Activated CD4-positive, alpha-beta T cell treated with anti-CD3 and anti-CD28 coated beads for 36 hours (primary cell): ENCODE measurements at regions of chr19 and their contacts with region 1.

Region 1: GRCh38 chr19:4164262-4164661 is 10.8 kb downstream of the CREB3L3 start:
- DNase-seq: no peak
- ATAC-seq: no peak
- H3K4me3 Mint-ChIP-seq: no peak overlapping the region
- H3K27ac Mint-ChIP-seq: no peak overlapping the region
- H3K4me1 Mint-ChIP-seq: no peaks in the 10 kb centered on the region
- H3K27me3 Mint-ChIP-seq: peaks cover 9% of the 10 kb centered on the region

Region 2: DNA sequence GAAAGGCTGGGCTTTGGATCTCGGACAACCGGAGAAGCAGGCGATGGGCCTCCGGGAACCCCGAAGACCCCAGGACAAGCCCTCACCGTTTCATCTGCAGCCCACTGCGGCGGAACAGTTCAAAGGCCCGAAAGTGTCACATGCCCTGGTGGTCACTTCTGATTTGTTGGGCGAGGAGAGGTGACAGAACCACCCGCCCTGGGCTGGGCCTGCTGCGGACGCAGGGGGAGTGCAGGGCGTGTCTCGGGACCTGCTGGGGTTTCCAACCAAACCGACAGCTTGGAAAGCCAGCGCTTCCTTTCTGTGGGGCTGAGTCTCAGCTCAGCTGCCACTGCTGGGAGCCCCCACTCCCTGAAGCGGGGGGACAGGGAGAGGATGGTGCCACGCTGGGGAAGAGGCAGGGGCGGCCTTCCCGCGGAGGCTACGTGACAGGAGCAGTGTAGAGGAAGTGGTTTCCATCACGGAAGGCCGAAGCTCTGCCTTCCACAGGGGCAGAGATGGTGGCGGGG is 74.8 kb before region 1 on chr19:
- CTCF ChIA-PET with region 1: no interaction called
- POLR2A ChIA-PET with region 1: no interaction called
- intact Hi-C with region 1: no loop called
- DNase-seq: peak; percentile 78
- ATAC-seq: peak; percentile 80
- H3K4me3 Mint-ChIP-seq: peak overlapping the region; percentile 76
- H3K27ac Mint-ChIP-seq: peak overlapping the region; percentile 93
- H3K4me1 Mint-ChIP-seq: peaks cover 43% of the 10 kb centered on the region
- H3K27me3 Mint-ChIP-seq: no peaks in the 10 kb centered on the region

Region 3: DNA sequence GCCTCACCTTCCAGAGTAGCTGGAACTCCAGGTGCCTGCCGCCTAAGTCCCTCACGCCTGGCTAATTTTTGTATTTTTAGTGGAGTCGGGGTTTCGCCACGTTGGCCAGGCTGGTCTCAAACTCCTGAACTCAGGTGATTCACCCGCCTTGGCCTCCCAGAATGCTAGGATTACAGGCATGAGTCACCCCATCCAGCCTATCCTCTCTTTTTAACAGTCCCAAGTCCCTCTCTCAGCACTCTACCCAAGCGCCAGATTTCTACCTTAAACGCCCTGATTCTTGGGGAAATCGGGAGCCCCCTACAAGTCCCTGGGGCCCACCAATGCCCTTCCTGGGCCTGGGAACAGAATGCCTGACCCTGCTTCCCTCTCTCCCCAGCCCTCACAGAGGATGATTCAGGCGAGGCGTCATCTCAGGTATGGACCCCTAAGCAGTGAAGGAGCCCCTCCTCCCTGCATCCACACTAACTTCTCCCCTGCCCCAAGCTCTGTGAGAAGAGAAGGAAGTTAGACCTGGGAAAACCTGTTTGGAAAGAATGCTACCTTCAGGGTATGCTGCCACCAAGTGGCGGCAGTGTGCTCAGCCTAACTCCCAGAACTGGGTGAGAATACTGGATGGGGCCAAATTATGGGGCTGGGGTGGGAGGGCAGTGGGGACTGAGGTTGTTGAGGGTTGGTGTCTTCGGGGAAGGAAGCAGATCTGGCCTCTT is 44.3 kb after region 1 on chr19:
- CTCF ChIA-PET with region 1: interaction called, 3 read pairs
- POLR2A ChIA-PET with region 1: no interaction called
- intact Hi-C with region 1: loop called (anchors 1 to 5 kb)
- DNase-seq: no peak
- ATAC-seq: no peak
- H3K4me3 Mint-ChIP-seq: no peak overlapping the region
- H3K27ac Mint-ChIP-seq: no peak overlapping the region
- H3K4me1 Mint-ChIP-seq: no peaks in the 10 kb centered on the region
- H3K27me3 Mint-ChIP-seq: peaks cover 5% of the 10 kb centered on the region

Region 4: DNA sequence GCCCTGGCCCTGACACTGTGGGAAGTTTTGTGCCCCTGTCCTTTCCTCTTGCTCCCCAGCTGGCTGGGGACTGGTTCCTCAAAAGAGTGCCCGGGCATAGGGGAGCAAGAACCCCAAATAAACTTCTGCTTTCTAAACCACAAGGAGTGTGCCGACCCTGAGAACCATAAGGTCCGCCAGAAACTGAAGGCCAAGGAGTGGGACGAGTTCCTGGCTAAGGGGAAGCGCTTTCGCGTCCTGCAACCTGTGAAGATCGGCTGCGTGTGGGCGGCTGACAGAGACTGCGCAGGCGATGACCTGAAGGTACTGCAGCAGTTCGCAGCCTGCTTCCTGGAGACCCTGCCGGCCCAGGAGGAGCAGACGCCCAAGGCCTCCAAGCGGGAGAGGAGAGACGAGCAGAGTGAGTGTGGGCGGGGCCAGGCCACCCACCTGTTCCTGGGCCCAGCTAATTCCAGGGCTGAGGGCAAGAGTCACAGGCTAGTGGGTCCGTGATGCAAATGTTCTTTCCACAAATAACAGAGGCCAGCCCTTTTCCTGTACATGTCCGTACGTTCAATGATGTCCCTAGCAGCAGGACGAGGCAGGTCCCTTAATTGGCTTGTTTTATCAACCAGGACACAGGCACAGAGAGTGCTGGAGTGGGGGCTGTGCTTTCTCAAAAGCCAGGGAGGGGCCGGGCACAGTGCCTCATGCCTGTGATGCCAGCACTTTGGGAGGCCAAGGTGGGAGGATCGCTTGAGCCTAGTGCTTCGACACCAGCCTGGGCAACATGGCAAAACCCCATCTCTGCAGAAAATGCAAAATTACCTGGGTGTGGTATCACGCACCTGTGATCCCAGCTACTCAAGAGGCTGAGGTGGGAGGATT is 267.8 kb after region 1 on chr19:
- CTCF ChIA-PET with region 1: no interaction called
- POLR2A ChIA-PET with region 1: no interaction called
- intact Hi-C with region 1: no loop called
- DNase-seq: no peak
- ATAC-seq: no peak
- H3K4me3 Mint-ChIP-seq: no peak overlapping the region
- H3K27ac Mint-ChIP-seq: no peak overlapping the region
- H3K4me1 Mint-ChIP-seq: no peaks in the 10 kb centered on the region
- H3K27me3 Mint-ChIP-seq: no peaks in the 10 kb centered on the region